ENCODE measurements at regions of chr12 and their contacts with region 1.

Region 1: GRCh38 chr12:19922687-19923086 is 445.6 kb upstream of the PDE3A start:
- DNase-seq: no peak
- H3K4me3 ChIP-seq: no peak overlapping the region
- H3K27ac ChIP-seq: no peak overlapping the region
- H3K4me1 ChIP-seq: no peaks in the 10 kb centered on the region
- H3K27me3 ChIP-seq: no peaks in the 10 kb centered on the region
- CTCF ChIP-seq: no peak

Region 2: GRCh38 chr12:20483776-20484175 is 561.1 kb after region 1 on chr12:
- intact Hi-C with region 1: no loop called
- DNase-seq: no peak
- H3K4me3 ChIP-seq: no peak overlapping the region
- H3K27ac ChIP-seq: no peak overlapping the region
- H3K4me1 ChIP-seq: no peaks in the 10 kb centered on the region
- H3K27me3 ChIP-seq: no peaks in the 10 kb centered on the region
- CTCF ChIP-seq: no peak

Region 3: DNA sequence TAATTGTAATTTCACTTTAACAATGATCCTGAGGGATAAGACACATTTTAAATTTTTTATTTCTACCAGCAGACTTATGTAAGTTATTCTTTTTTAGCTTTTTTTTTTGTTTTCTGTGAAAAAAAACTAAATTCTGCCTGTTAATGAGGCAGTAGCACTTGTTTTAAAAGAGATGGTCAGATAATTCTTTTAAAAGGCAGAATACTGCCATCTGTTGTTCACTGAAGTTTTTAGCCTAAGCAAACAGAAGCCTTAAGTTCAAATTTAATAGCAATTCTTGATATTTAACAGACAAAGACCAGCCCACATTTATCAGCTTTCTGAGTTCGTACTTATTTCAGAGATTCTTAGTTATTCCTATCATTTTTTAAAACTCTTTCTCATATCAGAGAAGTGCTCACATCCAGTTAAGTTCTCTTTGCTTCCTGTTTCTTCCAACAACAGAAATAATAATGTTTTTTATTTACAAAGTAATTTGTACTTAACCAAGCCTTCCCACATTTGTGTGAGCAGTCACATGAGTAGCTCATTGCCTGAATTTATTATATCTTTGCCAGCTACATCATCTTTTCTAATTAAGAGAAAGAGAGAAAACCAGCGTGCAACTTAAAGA is 679.1 kb after region 1 on chr12:
- intact Hi-C with region 1: loop called (anchors 10 kb)
- DNase-seq: peak in 2 of 5 donors; percentile 41 to 74
- H3K4me3 ChIP-seq: no peak overlapping the region
- H3K27ac ChIP-seq: no peak overlapping the region
- H3K4me1 ChIP-seq: no peaks in the 10 kb centered on the region
- H3K27me3 ChIP-seq: no peaks in the 10 kb centered on the region
- CTCF ChIP-seq: peak; percentile 45

Measured in kidney (tissue), 22 donors.